CD8-positive, alpha-beta T cell (primary cell): ENCODE measurements at regions of chr6 and their contacts with region 1.

Region 1: GRCh38 chr6:18400831-18401446 is 13.8 kb downstream of the RNF144B start:
- DNase-seq: no peak
- ATAC-seq: no peak
- H3K4me3 ChIP-seq: no peak overlapping the region
- H3K4me3 Mint-ChIP-seq: no peak overlapping the region
- H3K27ac ChIP-seq: no peak overlapping the region
- H3K27ac Mint-ChIP-seq: peak overlapping the region; percentile 85
- H3K4me1 ChIP-seq: peaks cover 10% of the 10 kb centered on the region
- H3K4me1 Mint-ChIP-seq: peaks cover 14% of the 10 kb centered on the region
- H3K27me3 ChIP-seq: no peaks in the 10 kb centered on the region
- H3K27me3 Mint-ChIP-seq: no peaks in the 10 kb centered on the region
- CTCF ChIP-seq: no peak

Region 2: GRCh38 chr6:16704401-16705045 is 1696.4 kb before region 1 on chr6:
- CTCF ChIA-PET with region 1: no interaction called
- POLR2A ChIA-PET with region 1: no interaction called
- intact Hi-C with region 1: loop called in 1 of 2 experiments (anchors 10 kb)
- DNase-seq: peak in 4 of 9 experiments; percentile 21 to 32 (median 30)
- ATAC-seq: peak; percentile 24
- H3K4me3 ChIP-seq: peak overlapping the region in 1 of 2 experiments; percentile 22
- H3K4me3 Mint-ChIP-seq: peak overlapping the region; percentile 62
- H3K27ac ChIP-seq: peak overlapping the region in 1 of 2 experiments; percentile 3
- H3K27ac Mint-ChIP-seq: peak overlapping the region; percentile 55
- H3K4me1 ChIP-seq: peaks cover 13% of the 10 kb centered on the region
- H3K4me1 Mint-ChIP-seq: peaks cover 62% of the 10 kb centered on the region
- H3K27me3 ChIP-seq: no peaks in the 10 kb centered on the region
- H3K27me3 Mint-ChIP-seq: no peaks in the 10 kb centered on the region
- CTCF ChIP-seq: no peak